A673 (cell line): ENCODE measurements at regions of chr14 and their contacts with region 1.

Region 1: GRCh38 chr14:64364907-64365306 is 23.2 kb upstream of the MTHFD1 start:
- DNase-seq: no peak
- H3K4me3 ChIP-seq: no peak overlapping the region
- H3K27ac ChIP-seq: no peak overlapping the region
- H3K4me1 ChIP-seq: no peaks in the 10 kb centered on the region
- H3K27me3 ChIP-seq: no peaks in the 10 kb centered on the region
- CTCF ChIP-seq: no peak

Region 2: GRCh38 chr14:64272019-64272418 is 92.9 kb before region 1 on chr14:
- CTCF ChIA-PET with region 1: no interaction called
- POLR2A ChIA-PET with region 1: interaction called, 10 read pairs
- intact Hi-C with region 1: no loop called
- DNase-seq: no peak
- H3K4me3 ChIP-seq: no peak overlapping the region
- H3K27ac ChIP-seq: no peak overlapping the region
- H3K4me1 ChIP-seq: no peaks in the 10 kb centered on the region
- H3K27me3 ChIP-seq: no peaks in the 10 kb centered on the region
- CTCF ChIP-seq: no peak